Activated T-helper 2 cell treated with anti-CD3 and anti-CD28 coated beads, Interferon-gamma antibody, Interleukin-2, Interleukin-4, amounts not matched to agents 10 μg/mL and 5 μg/mL and 100 μg/mL, durations not matched to agents 14 hours and 24 hours and 36 hours (primary cell): ENCODE measurements at regions of chr11 and their contacts with region 1.

Region 1: DNA sequence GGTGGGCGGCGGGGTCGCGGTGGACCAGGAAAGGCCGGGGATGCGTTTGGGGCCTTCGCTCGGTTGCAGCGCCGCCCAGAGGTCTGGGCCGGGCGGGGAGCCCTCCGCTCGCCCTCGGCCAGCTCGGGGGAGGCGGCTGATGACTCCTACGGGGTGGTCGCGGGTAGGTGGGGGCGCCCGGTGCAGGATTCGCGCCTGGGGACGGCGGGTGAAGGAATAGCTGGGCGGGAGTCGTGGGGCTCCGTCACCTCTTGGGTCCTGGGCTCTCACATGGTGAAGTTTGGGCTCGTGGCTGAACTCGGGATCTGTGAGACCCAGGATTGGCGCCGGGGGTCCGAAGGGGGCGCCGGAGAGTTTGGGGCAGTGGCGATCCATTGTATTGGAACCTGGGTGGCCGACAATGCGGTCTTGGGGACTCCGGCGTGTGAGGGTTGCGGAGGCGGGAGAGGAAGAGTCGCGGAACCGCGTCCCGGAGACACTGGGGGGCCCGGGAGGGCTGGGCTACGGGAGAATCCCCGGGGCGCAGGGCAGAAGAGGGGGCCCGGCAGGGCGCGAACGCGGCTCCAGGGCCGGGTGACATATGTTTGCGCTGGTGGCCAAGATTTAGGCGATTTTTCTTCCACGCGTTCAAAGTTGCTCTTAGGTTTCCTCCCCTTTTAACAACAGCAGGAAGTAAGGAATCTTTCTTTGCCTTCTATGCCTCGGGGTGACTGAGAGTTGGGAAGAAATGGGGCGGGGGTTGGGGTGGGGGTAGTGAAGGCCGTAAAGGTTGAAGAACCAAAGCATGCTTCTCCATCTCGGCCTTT is 935 bp downstream of the QSER1 start:
- DNase-seq: peak; percentile 23
- H3K4me3 Mint-ChIP-seq: peak overlapping the region; percentile 98
- H3K27ac Mint-ChIP-seq: peak overlapping the region; percentile 95
- H3K4me1 Mint-ChIP-seq: peaks cover 27% of the 10 kb centered on the region
- H3K27me3 Mint-ChIP-seq: peaks cover 8% of the 10 kb centered on the region

Region 2: GRCh38 chr11:32829680-32830412 is 63.7 kb before region 1 on chr11 and contains the start of gene PRRG4:
- intact Hi-C with region 1: loop called (anchors 2 kb)
- DNase-seq: peak; percentile 56
- H3K4me3 Mint-ChIP-seq: peak within 1 kb of the TSS; percentile 90
- H3K27ac Mint-ChIP-seq: peak within 1 kb of the TSS; percentile 87
- H3K4me1 Mint-ChIP-seq: peaks cover 13% of the 10 kb centered on the region
- H3K27me3 Mint-ChIP-seq: peaks cover 25% of the 10 kb centered on the region
- total RNA-seq, gene PRRG4: 1.1 and 1.3 TPM in 2 replicates

Region 3: GRCh38 chr11:32858731-32859130 is 34.8 kb before region 1 on chr11:
- intact Hi-C with region 1: no loop called
- DNase-seq: no peak
- H3K4me3 Mint-ChIP-seq: no peak overlapping the region
- H3K27ac Mint-ChIP-seq: no peak overlapping the region
- H3K4me1 Mint-ChIP-seq: no peaks in the 10 kb centered on the region
- H3K27me3 Mint-ChIP-seq: peaks cover 18% of the 10 kb centered on the region

Region 4: DNA sequence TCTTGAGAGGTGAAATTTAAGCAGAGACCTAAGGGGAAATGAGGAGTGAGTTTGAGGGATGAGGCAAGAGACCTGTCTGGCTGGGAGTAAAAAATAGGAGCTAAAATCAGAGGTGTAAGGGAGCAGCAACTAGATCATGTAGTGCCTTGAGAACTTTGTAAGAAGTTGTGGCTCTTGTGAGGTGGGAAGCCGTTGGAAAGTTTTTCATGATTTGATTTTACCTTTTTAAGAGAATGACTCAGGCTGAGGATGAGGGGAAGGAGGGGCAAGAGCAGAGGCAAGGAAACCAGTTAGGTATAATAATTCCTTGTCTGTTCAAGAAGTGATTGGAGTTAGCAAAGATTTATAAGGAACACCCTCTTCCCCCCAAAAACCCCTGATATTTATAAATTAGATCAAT is 24.9 kb after region 1 on chr11:
- intact Hi-C with region 1: no loop called
- DNase-seq: no peak
- H3K4me3 Mint-ChIP-seq: no peak overlapping the region
- H3K27ac Mint-ChIP-seq: no peak overlapping the region
- H3K4me1 Mint-ChIP-seq: peaks cover 27% of the 10 kb centered on the region
- H3K27me3 Mint-ChIP-seq: no peaks in the 10 kb centered on the region

Region 5: DNA sequence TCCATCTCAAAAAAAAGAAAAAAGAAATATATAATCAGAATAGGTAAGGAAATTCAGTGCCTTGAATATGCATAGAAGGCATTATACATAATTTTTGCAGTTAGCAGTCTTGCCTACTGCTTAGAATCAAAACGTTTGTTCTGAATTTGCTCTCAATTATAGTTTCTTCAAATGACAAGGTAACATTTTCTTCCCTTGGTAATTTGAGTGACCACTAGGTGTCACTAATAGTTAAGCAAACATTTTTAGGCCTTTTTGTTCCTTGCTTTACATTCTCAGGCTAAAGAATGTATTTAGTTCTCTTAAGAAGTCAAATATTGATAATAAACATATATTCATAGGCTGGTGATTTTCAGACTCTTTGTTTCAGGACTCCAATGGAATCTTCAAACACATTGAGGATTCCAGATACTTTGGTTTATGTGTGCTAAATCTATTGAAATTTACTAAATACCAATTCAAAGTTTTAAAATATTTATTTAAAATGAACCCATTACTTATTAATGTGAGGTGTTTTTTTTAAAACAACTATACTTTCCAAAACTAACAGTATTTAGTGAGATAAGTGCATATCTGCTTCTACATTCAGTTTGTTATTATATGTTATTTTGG is 67.1 kb after region 1 on chr11:
- intact Hi-C with region 1: no loop called
- DNase-seq: no peak
- H3K4me3 Mint-ChIP-seq: no peak overlapping the region
- H3K27ac Mint-ChIP-seq: no peak overlapping the region
- H3K4me1 Mint-ChIP-seq: peaks cover 11% of the 10 kb centered on the region
- H3K27me3 Mint-ChIP-seq: no peaks in the 10 kb centered on the region

Region 6: GRCh38 chr11:33039274-33040032 is 145.9 kb after region 1 on chr11 and contains the start of gene TCP11L1:
- intact Hi-C with region 1: loop called (anchors 1 kb)
- DNase-seq: peak; percentile 74
- H3K4me3 Mint-ChIP-seq: peak within 1 kb of the TSS; percentile 91
- H3K27ac Mint-ChIP-seq: peak within 1 kb of the TSS; percentile 93
- H3K4me1 Mint-ChIP-seq: peaks cover 36% of the 10 kb centered on the region
- H3K27me3 Mint-ChIP-seq: peaks cover 18% of the 10 kb centered on the region
- total RNA-seq, gene TCP11L1: 12.4 and 13.8 TPM in 2 replicates